ENCODE measurements at regions of chr12 and their contacts with region 1.

Region 1: GRCh38 chr12:71780237-71780822 is 25.7 kb downstream of the RAB21 start:
- DNase-seq: no peak
- ATAC-seq: no peak

Region 2: GRCh38 chr12:71828810-71829209 is 48.5 kb after region 1 on chr12:
- intact Hi-C with region 1: no loop called
- DNase-seq: no peak
- ATAC-seq: no peak

Region 3: DNA sequence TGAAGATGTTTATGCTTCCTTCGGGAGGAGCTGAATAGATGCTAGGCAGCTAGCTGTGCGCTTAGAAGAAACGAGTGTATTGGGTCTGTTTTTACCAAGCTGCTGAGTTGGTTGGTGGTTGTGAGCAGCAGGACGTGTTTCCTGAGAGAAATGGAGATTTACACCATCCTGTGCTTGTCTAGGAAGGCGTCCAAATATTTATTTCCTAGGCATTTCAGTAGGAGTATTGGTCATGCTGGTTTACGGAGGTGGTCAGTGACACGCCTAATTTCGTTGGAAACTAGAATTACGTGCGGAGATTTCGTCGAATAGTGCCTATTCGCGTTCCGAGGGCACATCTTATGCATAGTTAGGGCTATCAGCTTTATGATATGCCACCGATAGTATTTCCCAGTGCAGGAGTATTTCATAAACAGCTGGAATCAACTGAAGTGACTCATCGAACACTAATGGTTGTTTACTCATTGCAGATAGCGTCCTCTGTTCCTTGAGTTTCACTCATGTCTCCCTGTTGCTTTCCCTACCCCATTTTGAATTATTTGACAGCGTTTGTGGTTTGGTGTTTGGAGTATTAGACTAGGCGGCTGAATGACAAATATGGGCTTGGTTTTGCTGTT is 60.0 kb after region 1 on chr12:
- intact Hi-C with region 1: loop called (anchors 2 kb)
- DNase-seq: no peak
- ATAC-seq: no peak

Region 4: GRCh38 chr12:71900091-71900490 is 119.8 kb after region 1 on chr12:
- intact Hi-C with region 1: loop called (anchors 10 kb)
- DNase-seq: no peak
- ATAC-seq: no peak

Measured in Right ventricle myocardium inferior (tissue), 1 donor.